Right cardiac atrium (tissue), 5 donors: ENCODE measurements at regions of chr2 and their contacts with region 1.

Region 1: GRCh38 chr2:27016801-27017325 is 15.9 kb upstream of the TMEM214 start:
- DNase-seq: peak in 2 of 3 donors; percentile 70 to 76
- ATAC-seq: peak; percentile 8 to 57
- H3K4me3 ChIP-seq: no peak overlapping the region
- H3K27ac ChIP-seq: no peak overlapping the region
- H3K4me1 ChIP-seq: peaks cover 13% of the 10 kb centered on the region
- H3K27me3 ChIP-seq: no peaks in the 10 kb centered on the region

Region 2: DNA sequence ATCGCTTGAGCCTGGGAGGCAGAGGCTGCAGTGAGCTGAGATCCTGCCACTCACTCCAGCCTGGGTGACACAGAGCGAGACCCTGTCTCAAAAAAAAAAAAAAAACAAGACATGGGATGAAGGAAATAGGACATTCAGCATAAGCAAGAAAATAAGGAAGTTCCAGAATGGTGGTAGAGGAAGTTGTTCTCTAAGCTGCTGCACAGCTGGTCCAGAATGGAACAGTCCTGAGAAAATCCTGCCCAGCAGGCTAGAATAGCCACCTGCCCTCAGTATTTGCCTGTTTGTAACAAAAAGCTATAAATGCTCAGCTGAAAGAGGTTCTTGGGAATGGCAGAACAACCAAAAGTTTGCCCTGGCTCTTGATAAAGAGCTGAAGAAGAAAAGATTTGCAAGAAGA is 57.5 kb before region 1 on chr2:
- intact Hi-C with region 1: loop called in 3 of 4 experiments (anchors 2 to 5 kb)
- DNase-seq: no peak
- ATAC-seq: no peak
- H3K4me3 ChIP-seq: no peak overlapping the region
- H3K27ac ChIP-seq: no peak overlapping the region
- H3K4me1 ChIP-seq: no peaks in the 10 kb centered on the region
- H3K27me3 ChIP-seq: no peaks in the 10 kb centered on the region

Region 3: DNA sequence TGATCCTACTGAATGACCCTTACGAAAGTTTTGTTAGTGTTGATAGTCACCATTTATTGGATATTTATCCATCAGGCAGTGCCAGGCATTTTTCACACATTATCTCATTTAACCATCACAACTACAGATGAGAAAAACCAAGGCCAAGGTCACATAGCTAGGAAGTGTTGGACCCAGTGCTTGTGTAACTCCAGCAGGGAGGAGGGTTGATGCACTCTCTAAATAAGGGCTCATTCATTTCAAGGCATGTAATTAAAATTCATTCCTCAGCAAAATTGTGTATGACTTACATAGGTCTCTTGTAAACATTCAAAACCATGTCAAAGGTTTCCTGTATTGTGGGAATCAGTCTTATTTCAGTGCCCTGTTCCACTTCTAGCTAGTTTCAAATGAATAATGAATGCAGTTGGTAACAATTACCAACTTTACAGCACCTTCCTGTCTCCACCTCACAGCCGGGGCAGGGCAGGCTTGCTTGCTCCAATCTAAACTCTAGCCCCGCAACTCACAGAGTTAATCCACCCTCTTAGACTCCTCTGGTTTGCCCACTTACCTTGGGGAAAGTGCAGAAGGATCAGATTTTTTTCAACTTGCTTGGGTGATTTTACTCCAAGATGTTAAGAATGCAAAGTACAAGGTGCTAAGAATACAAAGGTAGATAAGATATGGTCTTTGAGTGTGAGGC is 52.3 kb before region 1 on chr2:
- intact Hi-C with region 1: loop called (anchors 2 to 5 kb)
- DNase-seq: no peak
- ATAC-seq: no peak
- H3K4me3 ChIP-seq: no peak overlapping the region
- H3K27ac ChIP-seq: no peak overlapping the region
- H3K4me1 ChIP-seq: no peaks in the 10 kb centered on the region
- H3K27me3 ChIP-seq: no peaks in the 10 kb centered on the region

Region 4: DNA sequence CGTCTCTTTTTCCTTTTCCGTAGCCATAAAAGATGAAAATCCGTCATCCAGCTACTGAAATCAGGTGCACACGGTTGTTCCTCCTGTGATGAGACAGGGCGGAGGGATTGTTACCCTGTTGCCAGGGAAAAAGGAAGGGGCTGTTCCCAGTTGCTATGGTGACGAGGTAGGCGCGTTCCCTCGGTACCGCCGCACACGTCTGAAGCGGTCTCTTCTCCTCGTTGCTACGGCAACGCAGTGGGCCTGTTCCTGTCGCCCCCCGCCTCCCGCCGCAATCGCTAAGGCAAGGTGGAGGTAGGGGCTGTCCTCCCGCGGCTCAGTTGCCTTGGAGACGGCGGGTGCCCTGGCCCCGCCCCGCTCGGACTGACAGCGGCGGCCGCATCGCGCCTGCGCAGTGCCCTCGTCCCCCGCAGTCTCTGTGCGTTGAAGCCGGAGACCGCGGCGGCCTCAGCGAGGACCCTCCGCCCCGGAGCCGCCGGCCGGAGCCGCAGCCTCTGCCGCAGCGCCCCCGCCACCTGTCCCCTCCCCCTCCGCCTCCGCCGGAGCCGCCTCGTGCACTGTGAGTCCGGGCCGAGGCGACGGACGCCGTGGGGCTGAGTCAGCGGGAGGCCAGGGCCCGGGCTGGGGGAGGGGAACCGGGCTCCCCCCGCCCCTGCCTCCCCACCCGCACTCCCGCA is 46.5 kb before region 1 on chr2 and contains the start of gene MAPRE3:
- intact Hi-C with region 1: loop called in 1 of 4 experiments (anchors 5 kb)
- DNase-seq: peak; percentile 83 to 95 (median 93)
- ATAC-seq: peak; percentile 95 to 96
- H3K4me3 ChIP-seq: peak within 1 kb of the TSS; percentile 53
- H3K27ac ChIP-seq: peak within 1 kb of the TSS; percentile 30
- H3K4me1 ChIP-seq: peaks cover 4% of the 10 kb centered on the region
- H3K27me3 ChIP-seq: no peaks in the 10 kb centered on the region
- total RNA-seq, gene MAPRE3: 43.6 to 58.8 (median 49.9) TPM